ENCODE measurements at regions of chr11 and their contacts with region 1.

Region 1: GRCh38 chr11:78202733-78203167 is 14.0 kb downstream of the USP35 start:
- DNase-seq: peak; percentile 73
- H3K4me3 Mint-ChIP-seq: peak overlapping the region; percentile 59
- H3K27ac Mint-ChIP-seq: peak overlapping the region; percentile 95
- H3K4me1 Mint-ChIP-seq: peaks cover 43% of the 10 kb centered on the region
- H3K27me3 Mint-ChIP-seq: no peaks in the 10 kb centered on the region

Region 2: GRCh38 chr11:78168539-78169477 is 33.9 kb before region 1 on chr11:
- CTCF ChIA-PET with region 1: no interaction called
- intact Hi-C with region 1: no loop called
- DNase-seq: no peak
- H3K4me3 Mint-ChIP-seq: no peak overlapping the region
- H3K27ac Mint-ChIP-seq: no peak overlapping the region
- H3K4me1 Mint-ChIP-seq: no peaks in the 10 kb centered on the region
- H3K27me3 Mint-ChIP-seq: no peaks in the 10 kb centered on the region

Region 3: DNA sequence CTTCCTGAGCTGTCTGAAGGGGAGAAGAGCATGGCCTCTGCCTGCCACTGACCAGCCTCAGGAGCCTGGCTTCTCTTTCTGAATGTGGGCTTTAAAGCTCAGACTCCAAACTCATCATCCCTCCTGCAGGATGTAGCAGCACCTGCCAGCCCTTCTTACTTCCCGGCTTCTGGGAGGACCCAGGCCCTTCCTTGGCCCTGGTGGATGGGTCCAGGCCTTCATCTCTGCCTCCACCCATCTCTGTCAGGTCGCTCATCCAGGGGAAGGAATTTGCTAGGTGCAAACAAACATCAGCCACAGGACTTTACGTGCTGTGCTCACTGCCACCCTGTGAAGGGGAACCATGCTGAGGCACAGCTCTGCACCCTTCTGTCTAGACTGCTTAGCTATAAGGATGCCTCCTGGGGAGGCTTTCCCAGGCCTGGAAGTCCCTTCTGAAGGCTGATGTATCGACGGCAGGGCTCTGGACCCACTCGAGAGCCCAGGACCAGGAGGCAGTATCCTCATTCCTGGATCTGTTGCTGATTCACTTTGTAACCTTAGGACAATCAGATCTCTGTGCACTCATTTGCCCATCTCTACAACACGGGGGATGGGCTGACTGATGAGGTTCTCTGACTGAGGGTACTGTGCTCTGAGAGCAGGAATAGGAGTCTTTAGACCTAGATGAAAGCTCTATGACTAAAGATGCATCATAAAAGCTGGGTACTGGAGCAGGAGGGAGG is 16.9 kb after region 1 on chr11:
- CTCF ChIA-PET with region 1: interaction called, 4 read pairs
- intact Hi-C with region 1: loop called (anchors 1 kb)
- DNase-seq: peak; percentile 50
- H3K4me3 Mint-ChIP-seq: no peak overlapping the region
- H3K27ac Mint-ChIP-seq: no peak overlapping the region
- H3K4me1 Mint-ChIP-seq: peaks cover 14% of the 10 kb centered on the region
- H3K27me3 Mint-ChIP-seq: no peaks in the 10 kb centered on the region

Region 4: DNA sequence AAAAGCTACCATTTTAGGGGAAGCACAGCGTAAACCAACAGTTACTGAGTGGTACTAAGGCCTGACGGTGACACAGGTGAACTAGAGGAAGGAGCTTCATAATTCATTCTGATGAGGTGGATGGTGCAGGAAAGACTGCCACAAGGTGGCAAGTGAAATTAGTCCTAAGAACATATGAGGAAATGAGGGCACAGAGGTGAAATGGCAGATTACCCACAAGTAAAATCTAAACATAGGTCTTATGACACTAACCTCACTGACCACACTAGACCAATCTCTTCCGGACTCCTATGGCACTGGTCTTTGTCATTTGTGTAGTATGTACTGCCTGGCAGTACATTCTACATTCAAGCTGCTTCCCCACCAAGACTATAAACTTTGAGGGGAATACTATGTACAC is 194.6 kb after region 1 on chr11:
- CTCF ChIA-PET with region 1: no interaction called
- intact Hi-C with region 1: no loop called
- DNase-seq: peak; percentile 19
- H3K4me3 Mint-ChIP-seq: no peak overlapping the region
- H3K27ac Mint-ChIP-seq: no peak overlapping the region
- H3K4me1 Mint-ChIP-seq: no peaks in the 10 kb centered on the region
- H3K27me3 Mint-ChIP-seq: no peaks in the 10 kb centered on the region

Region 5: GRCh38 chr11:78574386-78575381 is 371.9 kb after region 1 on chr11 and contains the start of gene NARS2:
- CTCF ChIA-PET with region 1: no interaction called
- intact Hi-C with region 1: loop called (anchors 1 kb)
- DNase-seq: peak; percentile 99
- H3K4me3 Mint-ChIP-seq: peak within 1 kb of the TSS; percentile 92
- H3K27ac Mint-ChIP-seq: peak within 1 kb of the TSS; percentile 84
- H3K4me1 Mint-ChIP-seq: peaks cover 23% of the 10 kb centered on the region
- H3K27me3 Mint-ChIP-seq: no peaks in the 10 kb centered on the region
- total RNA-seq, gene NARS2: 27.7 to 28.3 TPM